Aorta (tissue), 5 donors: ENCODE measurements at regions of chr17 and their contacts with region 1.

Region 1: DNA sequence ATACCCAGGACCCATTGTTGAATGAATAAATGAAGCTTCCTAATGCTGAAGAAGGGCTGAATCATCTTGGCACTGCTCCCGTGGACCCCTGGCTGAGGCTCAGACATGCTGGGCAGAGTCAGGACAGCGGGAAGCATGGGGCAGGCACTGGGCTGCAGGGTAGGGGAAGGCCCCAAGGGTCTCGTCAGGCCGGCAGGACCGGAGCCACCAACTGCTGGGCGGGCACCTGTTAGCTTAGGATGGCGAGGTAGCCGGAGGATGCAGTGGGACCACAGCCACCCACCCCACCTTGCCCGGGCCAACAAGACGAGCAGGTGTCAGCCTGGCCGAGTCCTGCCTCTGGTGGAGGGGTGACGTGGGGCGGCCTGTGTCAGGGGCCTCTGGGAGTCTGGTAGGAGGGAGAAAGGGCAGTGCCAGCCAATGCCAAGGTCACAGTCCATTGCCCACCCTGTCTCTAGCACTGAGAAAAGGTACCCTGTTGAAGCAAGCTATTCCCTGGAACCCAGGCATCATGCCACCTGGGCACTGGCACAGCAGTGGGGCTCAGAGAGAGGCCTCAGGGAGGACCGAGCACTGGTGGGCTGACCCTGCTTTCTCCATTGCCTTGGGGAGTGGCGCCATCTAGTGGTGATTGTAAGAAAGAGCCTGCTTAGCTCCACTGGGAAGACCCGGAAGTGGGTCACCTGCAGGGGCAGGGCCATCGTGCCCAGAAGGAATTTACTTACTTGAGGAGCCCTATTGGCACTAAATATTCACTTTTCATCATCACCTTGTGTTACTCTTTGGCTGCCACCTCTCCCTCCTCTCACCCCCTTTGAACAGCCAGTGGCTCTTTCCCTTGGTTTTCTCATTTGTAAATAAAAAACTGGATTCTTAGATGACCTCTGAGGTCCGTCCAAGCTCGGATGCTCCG is 3.0 kb upstream of the DLX3 start:
- DNase-seq: peak; percentile 84 to 88
- ATAC-seq: peak; percentile 83
- H3K4me3 ChIP-seq: no peak overlapping the region
- H3K27ac ChIP-seq: no peak overlapping the region
- H3K4me1 ChIP-seq: no peaks in the 10 kb centered on the region
- H3K27me3 ChIP-seq: no peaks in the 10 kb centered on the region

Region 2: DNA sequence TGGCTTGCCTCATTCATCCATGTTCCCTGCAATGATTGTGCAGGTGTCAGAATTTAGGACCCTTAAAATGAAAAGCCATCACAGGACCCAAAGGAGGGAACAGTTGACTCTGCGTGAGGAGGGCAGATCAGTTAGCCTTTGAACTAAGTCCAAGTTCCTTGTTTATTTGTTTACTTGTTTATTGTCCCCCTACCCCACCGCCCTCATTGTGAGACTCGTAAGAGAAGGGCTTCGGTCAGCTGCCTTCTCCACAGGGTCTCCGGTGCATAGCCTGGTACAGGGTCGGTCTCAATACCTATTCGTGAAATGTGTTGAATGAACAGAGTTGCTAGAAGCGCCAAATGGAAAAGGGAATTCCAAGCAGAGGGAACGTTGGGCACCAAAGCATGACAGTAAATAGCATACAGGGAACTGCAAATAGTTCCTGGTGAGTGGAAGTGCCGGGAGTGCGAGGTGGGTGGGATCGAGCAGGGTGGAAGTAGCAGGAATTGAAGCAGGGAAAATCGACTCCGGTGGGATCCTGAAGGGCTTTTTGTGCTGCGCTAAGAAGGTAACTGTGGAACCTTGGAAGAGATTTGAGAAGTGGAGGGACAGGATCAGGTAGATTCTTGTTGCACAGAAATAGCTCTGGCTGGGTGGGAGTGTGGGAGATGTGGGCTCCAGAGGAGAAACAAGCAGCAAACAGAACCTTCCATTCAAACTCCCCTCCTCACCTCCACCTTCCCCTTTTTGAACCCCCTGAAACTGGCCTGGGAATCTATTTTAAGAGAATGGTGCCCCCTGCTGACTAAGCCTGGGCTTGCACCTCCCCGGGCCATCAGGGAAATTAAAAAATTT is 303.0 kb before region 1 on chr17:
- intact Hi-C with region 1: loop called in 1 of 2 experiments (anchors 10 kb)
- DNase-seq: peak in 1 of 2 donors; percentile 86
- ATAC-seq: no peak
- H3K4me3 ChIP-seq: no peak overlapping the region
- H3K27ac ChIP-seq: peak overlapping the region in 1 of 2 donors; percentile 41
- H3K4me1 ChIP-seq: peaks cover 0 to 3% of the 10 kb centered on the region in 2 donors
- H3K27me3 ChIP-seq: no peaks in the 10 kb centered on the region

Region 3: DNA sequence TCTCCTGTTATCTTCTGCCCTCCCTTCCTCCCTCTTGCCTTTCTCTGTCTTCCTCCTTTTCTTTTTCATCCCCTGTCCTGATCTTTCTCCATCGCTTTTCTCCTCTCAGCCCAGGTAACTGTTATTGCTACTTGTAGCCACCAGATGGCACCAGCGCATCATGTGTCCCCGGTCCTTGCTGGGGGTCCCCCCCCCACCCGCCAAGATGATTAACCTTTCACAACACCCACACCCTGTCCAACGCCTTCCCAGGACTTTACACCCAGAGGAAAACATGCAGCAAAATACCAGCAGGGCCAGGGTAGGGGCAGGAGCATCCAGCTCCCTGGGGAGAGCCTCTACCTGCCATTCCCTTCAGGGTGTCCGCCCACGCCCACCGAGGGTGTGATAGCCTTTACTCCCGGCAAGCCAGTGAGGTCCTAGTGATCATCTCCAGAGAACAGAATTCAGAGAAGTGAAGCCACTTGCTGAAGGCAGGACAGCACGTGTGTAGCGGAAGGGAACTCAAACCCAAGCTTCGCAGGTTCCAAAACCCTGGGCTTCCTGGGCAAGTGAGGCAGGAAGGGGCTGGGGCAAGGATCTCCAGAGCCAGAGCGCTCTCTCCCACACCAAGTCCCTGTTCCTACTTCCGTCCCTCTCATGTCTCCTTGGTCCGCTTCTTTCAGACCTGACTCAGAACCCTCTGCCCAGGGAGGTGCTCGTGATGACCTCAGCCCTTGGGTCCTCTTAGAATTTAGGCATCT is 136.7 kb before region 1 on chr17:
- intact Hi-C with region 1: loop called (anchors 1 to 2 kb)
- DNase-seq: no peak
- ATAC-seq: no peak
- H3K4me3 ChIP-seq: no peak overlapping the region
- H3K27ac ChIP-seq: no peak overlapping the region
- H3K4me1 ChIP-seq: no peaks in the 10 kb centered on the region
- H3K27me3 ChIP-seq: no peaks in the 10 kb centered on the region

Region 4: DNA sequence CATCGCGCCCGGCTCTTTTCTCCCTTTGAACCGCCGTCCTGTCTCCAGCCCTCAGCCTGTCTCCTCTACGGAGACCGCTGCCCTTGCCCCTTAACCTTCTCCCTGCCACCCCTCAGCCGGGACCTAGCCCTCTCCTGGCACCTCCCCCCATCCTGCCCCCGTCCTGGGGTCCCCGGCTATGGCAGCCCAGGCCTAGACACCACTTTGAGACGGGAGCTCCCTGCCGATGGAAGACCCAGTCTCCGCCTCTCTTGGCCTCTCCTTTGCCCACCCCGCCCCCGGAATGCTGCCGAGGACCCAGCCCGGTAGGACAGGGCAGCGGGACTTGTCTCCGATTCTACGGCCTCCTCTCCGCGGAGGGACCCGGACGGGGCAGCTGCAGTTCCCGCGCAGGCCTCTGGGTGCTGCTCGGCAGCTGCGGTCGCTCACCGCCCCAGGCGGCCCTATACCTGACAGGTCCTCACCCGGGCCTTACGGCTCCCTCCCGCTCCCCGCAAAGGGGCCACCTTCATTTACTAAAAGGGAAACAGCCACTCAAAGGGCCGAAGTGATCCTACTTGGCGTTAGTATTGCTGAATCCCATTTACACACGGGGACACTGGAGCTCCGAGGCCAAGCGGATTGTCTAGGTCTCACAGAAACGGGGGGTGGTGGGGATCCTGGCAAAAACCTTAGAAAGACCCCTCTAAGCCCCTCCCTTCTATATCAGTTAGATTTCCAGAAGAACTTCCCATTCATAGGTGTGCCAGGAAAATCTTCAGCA is 117.6 kb before region 1 on chr17:
- intact Hi-C with region 1: loop called (anchors 1 to 5 kb)
- DNase-seq: peak; percentile 79 to 93
- ATAC-seq: peak; percentile 90
- H3K4me3 ChIP-seq: no peak overlapping the region
- H3K27ac ChIP-seq: no peak overlapping the region
- H3K4me1 ChIP-seq: no peaks in the 10 kb centered on the region
- H3K27me3 ChIP-seq: no peaks in the 10 kb centered on the region

Region 5: DNA sequence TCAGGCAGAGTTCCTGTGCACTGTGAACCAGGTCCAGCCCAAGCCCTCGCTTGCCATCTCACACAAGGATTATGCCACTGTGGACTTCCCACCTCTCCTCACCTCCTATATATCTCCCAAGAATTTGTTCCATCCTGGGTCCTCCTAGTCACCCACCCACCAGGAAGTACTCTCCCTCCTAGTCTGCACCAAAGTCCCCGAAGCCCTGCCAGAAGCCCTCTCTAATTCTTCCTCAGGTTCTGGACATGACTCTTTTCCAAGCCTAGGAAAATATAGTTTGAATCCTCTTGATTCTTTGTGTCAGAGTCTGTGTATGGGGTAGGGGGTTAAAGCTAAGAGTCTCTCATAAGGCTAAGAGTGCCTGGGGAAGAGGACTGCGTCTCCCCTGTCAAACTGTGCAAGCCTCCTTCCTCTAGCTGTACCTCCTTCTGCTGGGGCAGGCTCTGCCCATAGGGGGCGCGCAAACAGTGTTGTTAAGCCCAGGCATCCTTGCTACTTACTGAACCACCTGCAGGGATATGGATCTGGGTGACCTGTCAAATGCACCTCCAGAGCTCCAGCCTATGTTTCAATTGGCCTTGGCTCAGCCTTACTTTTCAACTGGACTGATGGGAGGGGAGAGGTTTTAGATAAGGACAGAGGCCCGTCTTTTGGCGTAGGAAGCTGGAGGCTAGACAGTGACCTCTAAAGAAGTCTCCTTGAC is 45.7 kb before region 1 on chr17:
- intact Hi-C with region 1: loop called (anchors 2 to 5 kb)
- DNase-seq: peak; percentile 84 to 92
- ATAC-seq: peak; percentile 75
- H3K4me3 ChIP-seq: no peak overlapping the region
- H3K27ac ChIP-seq: no peak overlapping the region
- H3K4me1 ChIP-seq: no peaks in the 10 kb centered on the region
- H3K27me3 ChIP-seq: no peaks in the 10 kb centered on the region